ENCODE measurements at regions of chr7 and their contacts with region 1.

Region 1: DNA sequence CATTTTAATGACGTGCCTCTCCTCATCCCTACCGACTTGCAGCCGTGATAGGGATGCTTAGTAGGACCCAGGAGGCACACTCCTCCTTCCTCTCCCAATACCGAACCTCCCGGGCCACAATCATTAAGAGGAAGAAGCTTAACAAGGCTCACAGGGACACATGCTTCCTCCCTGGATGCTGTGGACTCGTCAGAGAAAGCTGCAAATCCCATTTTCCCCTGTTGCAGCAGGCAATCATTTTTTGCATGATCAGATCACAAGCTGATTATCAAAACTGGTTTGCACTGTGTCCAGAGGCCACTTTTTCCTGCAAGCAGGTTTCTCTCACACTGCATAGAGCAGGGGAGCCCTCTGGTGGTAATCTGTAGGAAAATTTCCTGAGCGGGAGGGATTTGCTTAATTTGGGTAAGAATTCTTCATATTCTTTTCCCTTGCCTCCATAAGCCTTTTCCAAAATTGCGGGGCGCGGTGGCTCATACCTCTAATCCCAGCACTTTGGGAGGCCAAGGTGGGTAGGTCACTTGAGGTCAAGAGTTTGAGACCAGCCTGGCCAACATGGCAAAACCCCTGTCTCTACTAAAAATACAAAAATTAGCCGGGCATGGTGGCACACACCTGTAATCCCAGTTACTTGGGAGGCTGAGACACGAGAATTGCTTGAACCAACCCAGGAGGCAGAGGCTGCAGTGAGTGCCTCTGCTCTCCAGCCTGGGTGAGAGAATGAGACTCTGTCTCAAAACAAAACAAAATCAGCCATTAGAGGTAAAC is 16.1 kb upstream of the LAMB4 start:
- DNase-seq: peak in 4 of 5 donors; percentile 53 to 60 (median 56)
- ATAC-seq: peak; percentile 67 to 91 (median 88)
- H3K4me3 ChIP-seq: peak overlapping the region in 8 of 12 donors; percentile 3 to 43 (median 28)
- H3K27ac ChIP-seq: no peak overlapping the region
- H3K4me1 ChIP-seq: peaks cover 0 to 6% (median 0%) of the 10 kb centered on the region in 12 donors
- H3K27me3 ChIP-seq: peaks cover 0 to 5% (median 0%) of the 10 kb centered on the region in 9 donors
- CTCF ChIP-seq: peak; percentile 79 to 97 (median 94)
- POLR2A ChIP-seq: no peak

Region 2: DNA sequence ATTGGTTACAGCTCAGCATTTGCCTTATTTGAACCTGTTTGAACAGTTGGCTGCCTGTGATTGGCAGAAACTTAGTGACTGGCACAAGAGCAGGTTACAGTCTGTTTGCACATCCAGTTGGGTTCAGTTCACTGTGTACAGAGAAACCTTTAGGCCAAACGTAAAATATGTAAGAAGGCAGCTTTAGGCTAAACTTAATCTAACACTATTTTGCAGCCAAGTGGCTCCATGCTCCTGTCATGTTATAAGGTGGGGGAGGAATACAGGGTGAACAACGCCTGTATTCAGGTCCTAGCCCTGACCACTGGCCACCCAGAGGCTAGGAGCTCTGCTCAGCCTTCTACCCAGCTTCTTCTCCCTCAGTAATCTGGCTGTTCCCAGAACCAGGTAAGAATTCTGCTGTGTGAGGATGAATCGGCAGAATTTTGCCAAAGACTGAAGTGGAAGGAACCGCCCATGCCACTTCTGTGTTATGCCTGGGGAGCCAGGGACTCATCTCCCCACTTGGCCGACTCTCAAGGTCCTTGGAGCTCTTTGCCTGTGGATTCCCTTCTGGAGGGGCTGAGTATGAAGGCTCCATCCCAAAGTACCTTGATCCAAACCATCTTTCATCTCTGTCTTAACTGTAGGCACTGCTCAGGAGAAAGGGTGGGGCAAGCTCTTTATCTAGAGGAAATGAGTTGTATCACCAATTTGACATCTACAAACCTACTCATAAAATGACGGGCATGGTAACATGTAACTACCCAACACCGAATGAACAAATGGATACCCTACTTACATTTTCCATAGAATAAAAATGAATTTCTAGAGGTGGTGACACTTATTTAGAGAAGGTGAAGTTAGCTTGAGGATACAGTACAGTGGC is 1697.0 kb before region 1 on chr7:
- intact Hi-C with region 1: no loop called
- DNase-seq: no peak
- ATAC-seq: no peak
- H3K4me3 ChIP-seq: no peak overlapping the region
- H3K27ac ChIP-seq: no peak overlapping the region
- H3K4me1 ChIP-seq: no peaks in the 10 kb centered on the region
- H3K27me3 ChIP-seq: no peaks in the 10 kb centered on the region
- CTCF ChIP-seq: no peak
- POLR2A ChIP-seq: no peak

Region 3: GRCh38 chr7:107743567-107744344 is 402.5 kb before region 1 on chr7 and contains the start of gene CBLL1:
- intact Hi-C with region 1: loop called in 3 of 10 experiments (anchors 5 to 10 kb)
- DNase-seq: peak; percentile 97 to 98 (median 98)
- ATAC-seq: peak; percentile 98 to 99 (median 98)
- H3K4me3 ChIP-seq: peak within 1 kb of the TSS; percentile 67 to 94 (median 82)
- H3K27ac ChIP-seq: peak within 1 kb of the TSS; percentile 92 to 99 (median 97)
- H3K4me1 ChIP-seq: peaks cover 7 to 48% (median 28%) of the 10 kb centered on the region in 12 donors
- H3K27me3 ChIP-seq: no peaks in the 10 kb centered on the region
- CTCF ChIP-seq: peak; percentile 51 to 94 (median 74)
- POLR2A ChIP-seq: peak in 1 of 2 donors; percentile 72
- total RNA-seq, gene CBLL1: 17.1 to 39.8 (median 24.3) TPM

Region 4: GRCh38 chr7:107924841-107925504 is 221.3 kb before region 1 on chr7:
- intact Hi-C with region 1: loop called in 2 of 10 experiments (anchors 10 kb)
- DNase-seq: no peak
- ATAC-seq: no peak
- H3K4me3 ChIP-seq: no peak overlapping the region
- H3K27ac ChIP-seq: peak overlapping the region in 5 of 12 donors; percentile 6 to 56 (median 17)
- H3K4me1 ChIP-seq: peaks cover 0 to 41% (median 8%) of the 10 kb centered on the region in 12 donors
- H3K27me3 ChIP-seq: no peaks in the 10 kb centered on the region
- CTCF ChIP-seq: no peak
- POLR2A ChIP-seq: no peak

Region 5: DNA sequence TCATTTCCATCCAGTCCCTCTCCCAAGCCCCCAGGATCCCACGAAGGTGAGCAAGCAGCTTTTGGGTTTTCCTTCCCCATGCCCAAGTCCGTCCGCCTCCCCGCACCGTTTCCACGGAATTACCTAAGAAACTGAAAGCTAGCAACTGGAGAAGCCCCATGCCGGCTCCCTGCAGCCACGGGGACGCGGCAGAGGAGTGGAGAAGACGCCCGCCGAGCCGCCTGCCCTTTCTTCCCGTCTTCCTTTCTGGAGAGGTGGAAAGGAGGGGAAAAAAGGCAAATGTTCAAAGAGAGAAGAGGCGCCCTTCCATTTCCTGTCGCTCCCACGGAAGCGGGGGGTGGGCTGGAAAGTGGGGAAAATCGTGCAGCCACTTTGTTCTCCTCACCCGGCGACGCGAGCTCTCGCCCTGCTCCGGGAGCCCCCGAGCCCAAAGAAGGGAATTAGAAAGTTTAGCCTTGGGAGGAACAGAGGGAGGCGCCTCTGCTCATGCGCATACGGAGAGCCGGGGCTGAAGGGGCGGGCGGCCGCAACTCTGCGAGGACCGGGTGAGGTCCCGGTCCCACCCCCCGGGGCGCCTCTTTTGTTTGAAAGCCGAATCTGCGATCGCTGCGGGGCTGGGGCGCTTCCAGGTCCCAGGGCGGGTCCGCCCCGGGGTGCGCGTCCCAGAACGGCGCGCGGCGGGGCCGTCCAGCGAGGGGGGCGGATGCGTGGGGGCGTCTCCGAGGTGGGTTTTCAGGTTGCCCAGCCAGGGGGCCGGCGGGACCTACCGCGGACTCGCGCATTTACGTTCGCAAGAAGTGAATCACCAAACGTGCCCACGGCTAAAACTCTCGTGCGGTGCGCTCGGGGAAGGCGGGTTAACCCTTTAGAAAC is 143.3 kb before region 1 on chr7 and contains the start of gene LAMB1:
- intact Hi-C with region 1: loop called in 8 of 10 experiments (anchors 2 to 10 kb)
- DNase-seq: peak; percentile 78 to 84 (median 83)
- ATAC-seq: peak; percentile 32 to 85 (median 78)
- H3K4me3 ChIP-seq: peak within 1 kb of the TSS; percentile 63 to 91 (median 72)
- H3K27ac ChIP-seq: peak within 1 kb of the TSS; percentile 52 to 92 (median 86)
- H3K4me1 ChIP-seq: peaks cover 0 to 53% (median 35%) of the 10 kb centered on the region in 12 donors
- H3K27me3 ChIP-seq: peaks cover 0 to 36% (median 0%) of the 10 kb centered on the region in 9 donors
- CTCF ChIP-seq: no peak
- POLR2A ChIP-seq: peak in 1 of 2 donors; percentile 59
- total RNA-seq, gene LAMB1: 29.1 to 121 (median 58.0) TPM

Region 6: GRCh38 chr7:108114117-108114841 is 32.0 kb before region 1 on chr7:
- intact Hi-C with region 1: loop called in 7 of 10 experiments (anchors 2 to 5 kb)
- DNase-seq: no peak
- ATAC-seq: peak; percentile 41 to 91 (median 54)
- H3K4me3 ChIP-seq: no peak overlapping the region
- H3K27ac ChIP-seq: peak overlapping the region; percentile 5 to 82 (median 71)
- H3K4me1 ChIP-seq: peaks cover 0 to 7% (median 0%) of the 10 kb centered on the region in 12 donors
- H3K27me3 ChIP-seq: no peaks in the 10 kb centered on the region
- CTCF ChIP-seq: peak in 9 of 12 donors; percentile 18 to 29 (median 23)
- POLR2A ChIP-seq: no peak